OCI-LY7 (cell line): ENCODE measurements at regions of chr7 and their contacts with region 1.

Region 1: GRCh38 chr7:99364961-99365817 is 9.3 kb upstream of the ARPC1B start:
- DNase-seq: peak; percentile 55
- H3K4me3 ChIP-seq: no peak overlapping the region
- H3K27ac ChIP-seq: no peak overlapping the region
- H3K4me1 ChIP-seq: no peaks in the 10 kb centered on the region
- CTCF ChIP-seq: peak; percentile 78

Region 2: GRCh38 chr7:99386584-99387238 is 21.5 kb after region 1 on chr7:
- CTCF ChIA-PET with region 1: no interaction called
- POLR2A ChIA-PET with region 1: no interaction called
- intact Hi-C with region 1: loop called (anchors 1 kb)
- DNase-seq: peak; percentile 70
- H3K4me3 ChIP-seq: no peak overlapping the region
- H3K27ac ChIP-seq: no peak overlapping the region
- H3K4me1 ChIP-seq: peaks cover 8% of the 10 kb centered on the region
- CTCF ChIP-seq: peak; percentile 75